Thyroid gland (tissue), 4 donors: ENCODE measurements at regions of chrX and their contacts with region 1.

Region 1: DNA sequence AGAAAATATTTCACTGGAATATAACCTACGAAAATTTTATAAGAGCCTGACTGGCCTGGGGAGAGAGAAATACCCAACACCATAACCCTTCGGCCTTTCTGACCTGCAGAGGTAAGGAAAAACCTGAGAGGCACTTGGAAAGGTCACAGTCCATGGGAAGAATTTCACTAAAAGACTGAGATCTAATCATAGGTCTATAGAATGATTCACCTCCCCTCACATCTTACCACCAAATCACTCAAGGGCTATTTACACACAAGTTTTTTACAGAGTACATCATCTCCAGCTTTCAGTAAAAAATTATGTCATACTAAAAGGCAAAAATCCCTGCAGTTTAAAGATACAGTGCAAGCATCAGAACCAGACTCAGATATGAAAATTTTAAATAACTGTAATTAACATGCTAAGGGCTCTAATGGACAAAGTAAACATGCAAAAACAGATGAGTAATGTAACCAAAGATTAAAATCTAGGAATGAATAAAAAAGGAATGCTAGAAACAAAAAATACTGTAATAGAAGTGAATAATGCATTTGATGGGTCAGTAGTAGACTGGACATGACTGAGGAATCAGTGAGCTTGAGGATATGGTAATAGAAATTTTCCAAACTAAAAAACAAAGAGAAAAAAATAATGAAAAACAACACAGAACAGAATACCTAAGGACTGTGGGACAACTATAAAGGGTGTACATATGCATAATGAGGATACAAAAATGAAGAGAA is 32.1 kb upstream of the SLC16A2 start:
- DNase-seq: no peak
- H3K4me3 ChIP-seq: no peak overlapping the region
- H3K27ac ChIP-seq: no peak overlapping the region
- H3K4me1 ChIP-seq: no peaks in the 10 kb centered on the region
- H3K27me3 ChIP-seq: no peaks in the 10 kb centered on the region
- CTCF ChIP-seq: no peak
- POLR2A ChIP-seq: no peak

Region 2: GRCh38 chrX:73728602-73729001 is 660.6 kb before region 1 on chrX:
- intact Hi-C with region 1: no loop called
- DNase-seq: no peak
- H3K4me3 ChIP-seq: no peak overlapping the region
- H3K27ac ChIP-seq: no peak overlapping the region
- H3K4me1 ChIP-seq: no peaks in the 10 kb centered on the region
- H3K27me3 ChIP-seq: no peaks in the 10 kb centered on the region
- CTCF ChIP-seq: no peak
- POLR2A ChIP-seq: no peak

Region 3: DNA sequence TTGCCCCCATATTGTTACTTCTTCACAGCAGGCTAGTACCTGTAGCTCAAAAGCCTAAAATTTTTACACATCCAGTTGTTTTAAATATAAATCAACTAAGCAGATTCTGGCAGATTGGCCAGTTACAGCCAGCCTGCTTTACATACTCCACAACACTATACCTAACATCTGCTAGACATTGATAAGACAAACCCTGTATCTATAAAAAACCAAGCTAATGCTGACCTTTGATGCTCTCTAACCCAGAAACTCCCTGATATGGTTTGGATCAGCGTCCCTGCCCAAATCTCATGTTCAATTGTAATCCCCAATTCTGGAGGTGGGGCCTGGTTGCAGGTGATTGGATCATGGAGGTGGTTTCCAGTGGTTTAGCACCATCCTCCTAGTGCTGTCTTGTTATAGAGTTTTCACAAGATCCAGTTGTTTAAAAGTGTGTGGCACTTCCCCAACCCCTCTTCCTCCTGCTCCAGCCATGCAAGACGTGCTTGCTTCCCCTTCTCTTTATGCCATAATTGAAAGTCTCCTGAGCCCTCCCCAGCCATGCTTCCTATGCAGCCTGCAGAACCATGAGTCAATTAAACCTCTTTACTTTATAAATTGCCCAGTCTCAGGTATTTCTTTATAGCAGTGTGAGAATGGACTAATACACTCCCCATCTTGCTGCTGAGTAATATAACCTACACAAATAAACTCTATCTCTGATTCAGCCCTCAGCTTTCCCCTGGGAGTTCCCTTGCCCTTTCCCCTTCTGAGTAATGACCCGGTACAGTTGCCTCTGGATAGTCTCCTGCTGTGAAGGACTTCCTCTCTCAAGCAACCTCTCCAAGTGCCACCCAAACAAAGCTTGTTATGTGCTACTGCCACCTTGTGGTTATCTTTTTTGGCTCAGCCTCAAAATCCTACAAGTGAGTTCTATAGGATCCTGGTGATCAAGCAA is 45.5 kb before region 1 on chrX:
- intact Hi-C with region 1: no loop called
- DNase-seq: peak; percentile 44 to 57
- H3K4me3 ChIP-seq: no peak overlapping the region
- H3K27ac ChIP-seq: no peak overlapping the region
- H3K4me1 ChIP-seq: no peaks in the 10 kb centered on the region
- H3K27me3 ChIP-seq: no peaks in the 10 kb centered on the region
- CTCF ChIP-seq: peak in 4 of 6 experiments; percentile 52 to 69 (median 57)
- POLR2A ChIP-seq: no peak

Region 4: DNA sequence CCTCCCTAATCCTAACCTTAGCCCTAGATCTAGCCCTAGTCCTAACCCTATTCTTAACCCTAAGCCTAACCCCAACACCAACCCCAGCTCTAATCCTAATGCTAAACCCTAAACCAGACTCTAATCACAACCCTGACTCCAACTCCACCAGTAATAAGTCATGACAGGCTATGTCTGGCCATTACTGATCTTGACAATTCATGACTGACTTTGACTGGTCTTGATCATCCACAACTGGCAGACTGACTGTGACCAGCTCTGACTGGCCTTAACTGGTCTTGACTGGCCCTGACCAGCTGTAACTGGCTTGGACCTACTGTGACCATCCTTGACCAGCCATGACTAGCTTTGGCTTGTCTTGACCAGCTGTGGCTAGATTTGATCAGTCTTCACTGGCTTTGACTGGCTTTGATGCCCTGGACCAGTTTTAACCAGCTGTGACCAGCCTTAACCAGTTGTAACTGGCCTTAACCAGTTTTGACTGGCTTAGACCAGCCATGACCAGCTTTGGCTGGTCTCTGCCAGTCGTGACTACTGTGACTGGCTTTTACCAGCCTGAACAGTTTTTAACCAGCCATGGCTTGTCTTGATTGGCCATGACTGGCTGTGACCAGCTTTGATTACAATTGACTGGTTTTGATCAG is 156.8 kb after region 1 on chrX:
- intact Hi-C with region 1: loop called (anchors 5 kb)
- DNase-seq: no peak
- H3K4me3 ChIP-seq: no peak overlapping the region
- H3K27ac ChIP-seq: no peak overlapping the region
- H3K4me1 ChIP-seq: no peaks in the 10 kb centered on the region
- H3K27me3 ChIP-seq: no peaks in the 10 kb centered on the region
- CTCF ChIP-seq: no peak
- POLR2A ChIP-seq: no peak